ENCODE measurements at regions of chr3 and their contacts with region 1.

Region 1: GRCh38 chr3:132486086-132486485 is 68.8 kb downstream of the DNAJC13 start:
- DNase-seq: peak; percentile 17
- ATAC-seq: no peak
- H3K4me3 ChIP-seq: no peak overlapping the region
- H3K27ac ChIP-seq: no peak overlapping the region
- H3K4me1 ChIP-seq: no peaks in the 10 kb centered on the region
- H3K27me3 ChIP-seq: no peaks in the 10 kb centered on the region
- CTCF ChIP-seq: no peak
- POLR2A ChIP-seq: no peak
- RAD21 ChIP-seq: no peak

Region 2: DNA sequence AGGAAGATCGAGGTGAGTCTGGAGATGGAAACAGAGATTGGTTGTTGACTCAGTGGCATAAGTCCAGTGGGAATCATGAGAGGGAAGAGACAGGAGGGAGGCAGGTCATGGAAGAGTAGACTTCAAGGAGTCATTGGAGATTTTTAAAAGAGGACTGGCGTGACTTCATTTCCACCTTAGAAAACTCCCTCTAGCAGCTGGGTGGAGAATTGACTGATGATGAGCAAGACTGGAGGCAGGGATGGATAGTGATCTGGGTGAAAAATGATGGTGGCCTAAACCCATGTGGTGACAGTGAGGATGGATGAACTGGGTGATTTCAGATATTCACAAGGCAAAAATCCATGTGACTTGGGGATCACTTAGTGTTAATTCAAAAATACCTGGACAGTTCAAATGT is 428.2 kb before region 1 on chr3:
- CTCF ChIA-PET with region 1: no interaction called
- POLR2A ChIA-PET with region 1: no interaction called
- dilution Hi-C with region 1: no loop called
- in situ Hi-C with region 1: no loop called
- intact Hi-C with region 1: no loop called
- DNase-seq: no peak
- ATAC-seq: no peak
- H3K4me3 ChIP-seq: no peak overlapping the region
- H3K27ac ChIP-seq: no peak overlapping the region
- H3K4me1 ChIP-seq: no peaks in the 10 kb centered on the region
- H3K27me3 ChIP-seq: no peaks in the 10 kb centered on the region; the same call in 1 of the 2 replicates
- CTCF ChIP-seq: no peak
- POLR2A ChIP-seq: no peak
- RAD21 ChIP-seq: no peak

Region 3: DNA sequence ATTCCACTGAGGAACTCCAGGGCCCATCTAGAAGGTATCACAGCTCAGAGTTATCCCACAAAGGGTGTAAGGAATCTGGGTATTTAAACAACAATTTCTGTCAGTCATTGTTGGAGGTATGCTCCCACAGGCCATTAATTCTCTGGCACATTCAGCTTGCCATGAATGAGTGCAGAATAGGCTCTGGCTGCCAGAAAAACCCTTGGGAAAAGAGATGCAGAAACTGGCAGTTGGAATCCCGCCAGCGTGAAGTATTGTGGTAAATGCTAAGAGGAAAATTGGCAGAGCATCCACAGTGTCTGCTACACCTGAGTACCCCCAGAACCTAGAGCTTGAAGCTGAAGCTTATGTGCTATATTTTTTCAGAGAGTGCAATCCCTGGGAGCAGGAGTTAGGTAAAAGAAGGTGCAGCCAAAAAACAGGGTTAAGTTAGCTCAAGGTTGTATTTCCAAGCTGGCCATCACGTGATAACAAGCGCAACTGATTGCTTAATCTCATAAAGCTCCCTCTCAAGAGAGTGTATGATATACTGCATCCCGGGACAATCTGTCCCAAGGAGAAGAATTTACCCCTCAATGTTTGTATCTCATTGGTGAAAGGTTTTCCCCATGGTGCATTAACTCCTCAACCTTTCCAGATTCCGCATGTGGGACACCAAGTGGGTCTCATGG is 263.1 kb before region 1 on chr3:
- CTCF ChIA-PET with region 1: no interaction called
- POLR2A ChIA-PET with region 1: interaction called, 11 read pairs
- dilution Hi-C with region 1: no loop called
- in situ Hi-C with region 1: no loop called
- intact Hi-C with region 1: no loop called
- DNase-seq: no peak
- ATAC-seq: no peak
- H3K4me3 ChIP-seq: no peak overlapping the region
- H3K27ac ChIP-seq: no peak overlapping the region
- H3K4me1 ChIP-seq: no peaks in the 10 kb centered on the region; the same call in 1 of the 2 replicates
- H3K27me3 ChIP-seq: peaks cover 5% of the 10 kb centered on the region; the same call in 1 of the 2 replicates
- CTCF ChIP-seq: no peak
- POLR2A ChIP-seq: no peak
- RAD21 ChIP-seq: no peak

Region 4: DNA sequence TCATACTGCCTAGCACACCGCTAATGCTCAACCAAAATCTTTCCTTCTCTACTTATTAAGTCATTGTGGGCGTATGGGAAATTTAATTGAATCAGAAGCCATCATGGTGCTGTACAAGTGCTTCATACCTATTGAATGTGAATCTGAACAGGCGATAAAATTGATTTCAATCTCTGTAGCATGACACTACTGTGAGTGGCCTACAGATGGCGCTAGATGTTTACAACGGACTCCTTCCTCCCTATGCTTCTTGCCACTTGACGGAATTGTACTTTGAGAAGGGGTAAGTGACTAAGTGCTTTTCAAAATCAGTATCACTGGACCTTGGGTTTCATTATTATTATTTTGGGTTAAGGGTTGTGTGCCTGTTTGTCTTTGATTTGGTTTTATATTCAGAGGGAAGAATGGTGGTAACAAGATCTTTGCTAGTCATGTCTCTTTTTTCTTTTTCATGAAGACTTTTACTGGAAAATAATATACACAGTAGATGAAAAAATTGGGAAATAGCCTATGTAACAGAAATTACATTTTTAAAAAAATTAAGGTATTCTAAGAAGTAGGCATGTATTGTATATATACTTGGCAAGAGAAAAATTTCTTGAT is 133.4 kb before region 1 on chr3:
- CTCF ChIA-PET with region 1: no interaction called
- POLR2A ChIA-PET with region 1: no interaction called
- dilution Hi-C with region 1: no loop called
- in situ Hi-C with region 1: no loop called
- intact Hi-C with region 1: no loop called
- DNase-seq: peak; percentile 68
- ATAC-seq: peak; percentile 96
- H3K4me3 ChIP-seq: no peak overlapping the region
- H3K27ac ChIP-seq: no peak overlapping the region
- H3K4me1 ChIP-seq: no peaks in the 10 kb centered on the region
- H3K27me3 ChIP-seq: peaks cover 5% of the 10 kb centered on the region
- CTCF ChIP-seq: peak; percentile 91
- POLR2A ChIP-seq: no peak
- RAD21 ChIP-seq: peak; percentile 69

Region 5: GRCh38 chr3:132416807-132417694 is 69.0 kb before region 1 on chr3 and contains the start of gene DNAJC13:
- CTCF ChIA-PET with region 1: no interaction called
- POLR2A ChIA-PET with region 1: no interaction called
- dilution Hi-C with region 1: no loop called
- in situ Hi-C with region 1: no loop called
- intact Hi-C with region 1: loop called (anchors 5 kb)
- DNase-seq: peak; percentile 93
- ATAC-seq: peak; percentile 91
- H3K4me3 ChIP-seq: peak within 1 kb of the TSS; percentile 89
- H3K27ac ChIP-seq: peak within 1 kb of the TSS; percentile 92
- H3K4me1 ChIP-seq: no peaks in the 10 kb centered on the region; the same call in none of the 2 replicates
- H3K27me3 ChIP-seq: no peaks in the 10 kb centered on the region
- CTCF ChIP-seq: no peak
- POLR2A ChIP-seq: peak; percentile 76
- RAD21 ChIP-seq: no peak; the same call in 1 of the 2 replicates
- total RNA-seq, gene DNAJC13: 48.6 and 67.8 TPM in 2 replicates

Region 6: DNA sequence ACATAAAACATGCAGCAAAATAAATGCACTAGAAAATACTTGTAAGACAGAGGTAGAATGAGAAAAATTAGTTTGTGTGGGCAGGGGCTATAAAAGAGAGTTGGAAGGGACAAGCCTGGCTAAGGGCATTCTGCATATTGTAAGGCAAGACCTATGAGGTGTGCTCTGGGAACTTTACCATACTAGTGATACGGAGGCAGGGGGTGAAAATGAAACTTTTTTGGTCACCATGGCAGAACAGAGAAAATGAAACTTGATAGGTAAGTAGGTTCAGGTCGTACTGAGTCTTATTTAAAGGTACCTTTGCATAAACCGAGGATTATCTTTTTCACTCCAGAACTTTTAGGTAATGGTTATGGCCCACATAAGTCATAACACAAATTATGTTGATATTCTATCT is 36.3 kb after region 1 on chr3:
- CTCF ChIA-PET with region 1: interaction called, 3 read pairs
- POLR2A ChIA-PET with region 1: no interaction called
- dilution Hi-C with region 1: no loop called
- in situ Hi-C with region 1: no loop called
- intact Hi-C with region 1: loop called (anchors 5 kb)
- DNase-seq: no peak
- ATAC-seq: no peak
- H3K4me3 ChIP-seq: no peak overlapping the region
- H3K27ac ChIP-seq: no peak overlapping the region
- H3K4me1 ChIP-seq: no peaks in the 10 kb centered on the region
- H3K27me3 ChIP-seq: no peaks in the 10 kb centered on the region
- CTCF ChIP-seq: no peak
- POLR2A ChIP-seq: no peak
- RAD21 ChIP-seq: no peak

Region 7: DNA sequence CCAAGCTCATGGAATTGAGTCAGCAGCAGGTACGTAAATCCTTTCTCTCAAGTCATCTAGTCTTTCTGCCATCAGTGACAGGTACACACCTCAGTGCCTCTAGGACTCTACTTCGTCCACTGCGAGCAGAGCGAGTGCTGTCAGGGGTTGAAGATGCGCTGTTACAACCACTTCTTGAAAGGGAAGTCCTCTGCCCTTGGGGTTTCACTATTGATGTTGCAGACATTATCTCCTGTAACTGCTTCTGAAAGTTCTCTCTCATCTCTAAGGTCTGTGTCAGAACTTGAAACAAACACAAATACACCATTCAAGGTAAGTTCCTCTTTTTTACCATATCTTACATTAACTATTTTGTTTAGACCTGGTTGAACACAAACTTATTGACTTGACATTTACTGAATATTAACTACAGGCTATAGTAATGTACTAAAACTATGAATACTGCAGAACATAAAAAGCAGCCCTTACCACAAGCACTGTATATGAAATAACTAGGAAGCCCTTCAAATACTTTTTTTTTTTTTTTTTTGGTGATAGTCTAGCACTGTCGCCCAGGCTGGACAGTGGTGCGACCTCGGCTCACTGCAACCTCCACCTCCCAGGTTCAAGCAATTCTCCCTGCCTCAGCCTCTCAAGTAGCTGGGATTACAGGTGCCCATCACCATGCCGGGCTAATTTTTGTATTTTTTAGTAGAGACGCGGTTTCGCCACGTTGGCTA is 1134.1 kb after region 1 on chr3:
- CTCF ChIA-PET with region 1: no interaction called
- POLR2A ChIA-PET with region 1: no interaction called
- dilution Hi-C with region 1: no loop called
- in situ Hi-C with region 1: loop called (anchors 25 kb)
- intact Hi-C with region 1: no loop called
- DNase-seq: no peak
- ATAC-seq: no peak
- H3K4me3 ChIP-seq: no peak overlapping the region
- H3K27ac ChIP-seq: no peak overlapping the region
- H3K4me1 ChIP-seq: no peaks in the 10 kb centered on the region; the same call in 1 of the 2 replicates
- H3K27me3 ChIP-seq: no peaks in the 10 kb centered on the region
- CTCF ChIP-seq: no peak
- POLR2A ChIP-seq: no peak
- RAD21 ChIP-seq: no peak

Measured in IMR-90 (cell line).